MCF 10A (cell line): ENCODE measurements at regions of chr10 and their contacts with region 1.

Region 1: DNA sequence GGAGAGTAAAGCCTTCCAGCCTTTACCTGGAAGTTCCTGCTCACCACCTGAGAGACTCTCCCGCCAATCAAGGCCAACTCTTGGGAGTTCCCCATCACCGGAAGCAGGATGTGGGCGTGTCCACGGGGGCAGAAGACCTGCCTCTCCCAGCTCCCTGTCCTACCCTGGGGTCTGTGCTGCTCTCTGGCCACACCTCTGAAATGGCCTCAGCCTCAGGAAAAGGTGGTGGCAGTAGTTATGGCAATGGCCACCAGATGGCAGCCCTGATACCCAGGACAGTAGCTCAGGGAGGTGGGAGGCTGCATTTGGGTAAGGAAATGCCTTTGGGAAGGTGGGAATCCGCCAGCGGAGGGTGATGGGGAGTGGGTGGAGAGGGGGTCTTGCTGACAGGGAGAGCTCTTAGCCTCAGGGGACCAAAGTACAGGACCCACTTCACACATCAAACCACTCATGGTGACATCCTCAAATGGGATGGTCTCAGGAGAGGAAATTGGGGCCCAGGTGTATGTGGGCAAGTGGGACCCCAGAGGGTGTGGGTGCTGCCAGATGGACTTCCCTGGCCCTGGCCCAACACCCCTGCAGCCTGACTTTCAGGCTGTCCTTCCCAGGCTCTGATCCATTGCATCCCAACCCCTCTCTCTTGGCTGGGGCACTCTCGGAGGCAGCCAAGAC is 33.9 kb downstream of the KAZALD1 start:
- DNase-seq: peak; percentile 86
- H3K4me3 Mint-ChIP-seq: no peak overlapping the region
- H3K27ac Mint-ChIP-seq: no peak overlapping the region
- H3K4me1 Mint-ChIP-seq: peaks cover 9% of the 10 kb centered on the region
- H3K27me3 Mint-ChIP-seq: peaks cover 17% of the 10 kb centered on the region
- CTCF ChIP-seq: peak; percentile 74

Region 2: GRCh38 chr10:101067356-101068083 is 28.2 kb before region 1 on chr10:
- CTCF ChIA-PET with region 1: interaction called, 28 read pairs
- POLR2A ChIA-PET with region 1: no interaction called
- intact Hi-C with region 1: no loop called
- DNase-seq: peak; percentile 87
- H3K4me3 Mint-ChIP-seq: peak overlapping the region; percentile 85
- H3K27ac Mint-ChIP-seq: no peak overlapping the region
- H3K4me1 Mint-ChIP-seq: peaks cover 12% of the 10 kb centered on the region
- H3K27me3 Mint-ChIP-seq: no peaks in the 10 kb centered on the region
- CTCF ChIP-seq: peak; percentile 81

Region 3: DNA sequence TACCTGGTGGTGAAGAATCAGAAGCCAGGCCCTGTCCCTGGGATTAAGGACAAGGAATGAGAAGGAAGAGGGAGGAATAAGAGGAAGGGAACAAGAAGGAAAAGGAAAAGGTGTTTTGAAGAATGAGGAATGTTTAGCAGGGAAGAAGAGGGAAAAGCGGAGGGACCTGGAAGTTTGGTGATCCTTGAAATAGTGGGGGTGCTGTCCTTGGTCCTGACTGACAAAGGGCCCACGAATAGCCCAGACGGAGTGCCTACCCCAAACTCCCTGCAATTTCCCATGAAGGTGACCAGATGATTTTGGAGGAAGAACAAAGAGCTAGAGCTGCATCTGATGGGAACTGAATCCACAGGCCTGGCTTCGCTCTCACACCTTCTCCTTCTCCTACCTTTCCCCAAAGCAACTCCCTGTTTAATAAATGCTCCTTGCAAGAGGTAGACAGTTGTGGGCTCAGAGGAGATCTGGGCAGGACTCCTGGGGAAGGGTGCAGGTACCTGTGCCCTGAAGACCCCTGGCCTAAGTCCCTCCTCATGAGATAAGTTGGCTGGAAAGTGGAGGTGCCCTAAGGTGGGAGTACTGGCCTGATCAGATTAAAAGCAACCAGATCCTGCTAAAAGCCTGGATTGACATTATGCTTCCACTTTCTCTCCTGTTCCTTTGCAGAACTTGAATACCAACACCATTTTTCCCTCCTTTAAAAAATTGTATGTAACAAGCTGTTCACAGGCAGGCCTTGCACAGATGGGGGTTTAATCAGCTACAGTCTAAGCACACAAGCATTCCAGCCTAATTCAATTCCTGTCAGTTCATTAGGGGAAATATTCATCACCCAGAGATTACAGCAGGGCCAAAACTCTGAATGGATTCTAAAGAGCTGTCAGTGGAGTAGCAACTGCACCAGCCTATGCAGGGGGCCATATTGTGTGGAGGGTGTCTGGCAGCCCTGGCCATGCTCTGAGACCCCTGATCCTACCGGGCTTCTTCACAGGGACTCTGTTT is 14.4 kb before region 1 on chr10:
- CTCF ChIA-PET with region 1: interaction called, 64 read pairs
- POLR2A ChIA-PET with region 1: interaction called, 3 read pairs
- intact Hi-C with region 1: no loop called
- DNase-seq: peak; percentile 45
- H3K4me3 Mint-ChIP-seq: no peak overlapping the region
- H3K27ac Mint-ChIP-seq: no peak overlapping the region
- H3K4me1 Mint-ChIP-seq: peaks cover 5% of the 10 kb centered on the region
- H3K27me3 Mint-ChIP-seq: peaks cover 45% of the 10 kb centered on the region
- CTCF ChIP-seq: no peak

Region 4: DNA sequence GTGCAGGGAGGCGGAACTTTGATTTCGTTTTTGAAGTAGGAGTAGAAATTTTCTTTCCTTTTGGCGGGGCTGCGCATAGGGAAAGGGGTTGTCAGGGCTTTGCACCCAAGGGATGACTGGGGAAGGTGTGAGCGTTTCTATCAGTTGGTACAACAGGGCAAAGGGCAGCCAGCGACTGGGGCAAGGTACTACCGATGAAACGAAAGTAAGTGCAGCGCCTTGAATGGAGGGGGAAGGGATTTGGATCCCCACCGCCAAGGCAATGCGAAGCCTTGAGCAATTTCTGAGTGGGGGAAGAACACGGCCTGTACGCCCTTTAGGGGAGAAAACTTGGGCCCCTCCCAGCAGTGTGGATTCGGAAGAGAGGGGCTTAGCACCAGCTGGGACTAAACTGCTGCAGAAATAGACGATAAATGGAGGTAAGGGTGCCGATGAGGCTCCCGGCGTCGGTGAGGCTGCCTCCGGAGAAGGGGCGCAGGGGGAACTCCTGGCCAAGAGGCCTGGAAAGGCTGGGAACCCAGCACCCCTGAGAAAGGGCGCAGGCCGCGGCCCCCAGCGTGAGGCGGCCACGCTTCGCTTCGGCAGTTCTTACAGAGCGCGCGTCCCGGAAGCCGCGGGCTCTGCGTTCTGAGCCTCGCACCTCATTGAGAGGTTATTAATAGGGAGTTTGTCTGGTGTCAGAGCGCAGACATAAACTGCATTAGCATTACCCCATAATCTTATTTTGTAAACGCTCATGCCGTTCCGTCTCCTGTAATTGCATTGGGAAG is 25.4 kb after region 1 on chr10:
- CTCF ChIA-PET with region 1: interaction called, 50 read pairs
- POLR2A ChIA-PET with region 1: no interaction called
- intact Hi-C with region 1: no loop called
- DNase-seq: no peak
- H3K4me3 Mint-ChIP-seq: no peak overlapping the region
- H3K27ac Mint-ChIP-seq: no peak overlapping the region
- H3K4me1 Mint-ChIP-seq: peaks cover 8% of the 10 kb centered on the region
- H3K27me3 Mint-ChIP-seq: peaks cover 48% of the 10 kb centered on the region
- CTCF ChIP-seq: no peak

Region 5: GRCh38 chr10:101135141-101136006 is 39.7 kb after region 1 on chr10:
- CTCF ChIA-PET with region 1: interaction called, 419 read pairs
- POLR2A ChIA-PET with region 1: interaction called, 3 read pairs
- intact Hi-C with region 1: no loop called
- DNase-seq: no peak
- H3K4me3 Mint-ChIP-seq: no peak overlapping the region
- H3K27ac Mint-ChIP-seq: no peak overlapping the region
- H3K4me1 Mint-ChIP-seq: peaks cover 11% of the 10 kb centered on the region
- H3K27me3 Mint-ChIP-seq: peaks cover 47% of the 10 kb centered on the region
- CTCF ChIP-seq: no peak